ENCODE measurements at regions of chr13 and their contacts with region 1.

Region 1: GRCh38 chr13:35720690-35721554 is 244.4 kb upstream of the MAB21L1 start:
- DNase-seq: peak in 4 of 5 donors; percentile 30 to 53 (median 44)
- ATAC-seq: peak in 3 of 4 donors; percentile 7 to 49 (median 20)
- H3K4me3 ChIP-seq: peak overlapping the region in 6 of 12 donors; percentile 23 to 33 (median 28)
- H3K27ac ChIP-seq: peak overlapping the region in 6 of 12 donors; percentile 3 to 44 (median 34)
- H3K4me1 ChIP-seq: peaks cover 0 to 41% (median 23%) of the 10 kb centered on the region in 12 donors
- H3K27me3 ChIP-seq: no peaks in the 10 kb centered on the region
- CTCF ChIP-seq: peak; percentile 80 to 91 (median 84)
- POLR2A ChIP-seq: no peak

Region 2: DNA sequence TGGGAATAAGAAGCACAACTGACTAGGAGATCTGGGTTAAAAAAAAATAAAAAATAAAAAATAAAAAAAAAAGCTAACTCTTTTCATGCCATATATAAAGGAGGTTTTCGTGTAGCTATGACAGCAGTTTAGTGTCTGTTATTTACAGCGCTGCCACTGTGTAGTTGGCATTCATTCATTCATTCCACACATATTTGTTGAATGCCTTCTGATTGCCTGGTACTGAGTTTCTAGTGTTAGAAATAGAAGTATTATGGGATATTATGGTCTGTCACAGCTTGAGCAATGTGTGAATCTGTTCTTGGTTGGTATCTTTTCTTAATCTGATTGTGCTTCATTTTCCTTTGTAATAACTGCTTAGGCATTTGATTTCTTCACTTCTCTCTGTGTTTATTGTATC is 541.4 kb before region 1 on chr13:
- intact Hi-C with region 1: loop called in 1 of 10 experiments (anchors 10 kb)
- DNase-seq: no peak
- ATAC-seq: peak; percentile 68 to 90 (median 73)
- H3K4me3 ChIP-seq: peak overlapping the region in 6 of 12 donors; percentile 1 to 32 (median 15)
- H3K27ac ChIP-seq: peak overlapping the region; percentile 2 to 73 (median 62)
- H3K4me1 ChIP-seq: peaks cover 0 to 21% (median 1%) of the 10 kb centered on the region in 12 donors
- H3K27me3 ChIP-seq: no peaks in the 10 kb centered on the region
- CTCF ChIP-seq: no peak
- POLR2A ChIP-seq: no peak

Region 3: DNA sequence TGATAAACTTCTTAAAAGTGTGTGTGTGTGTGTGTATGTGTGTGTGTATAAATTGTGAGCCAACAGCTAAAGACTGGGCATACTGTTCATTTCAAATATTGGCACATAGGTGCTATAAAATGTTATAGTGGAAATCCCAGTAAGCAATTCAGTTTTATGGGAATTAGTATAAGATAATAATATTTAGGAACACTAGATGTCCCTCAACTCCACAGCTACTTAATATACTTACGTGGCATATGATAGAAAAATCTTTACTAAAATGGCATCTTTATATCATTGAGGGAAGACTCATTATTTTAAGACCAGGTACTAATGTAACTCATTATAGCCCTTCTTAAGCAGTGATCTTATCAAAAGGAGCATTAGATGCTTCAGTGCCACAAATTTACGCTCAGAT is 510.7 kb before region 1 on chr13:
- intact Hi-C with region 1: loop called in 3 of 10 experiments (anchors 10 kb)
- DNase-seq: no peak
- ATAC-seq: no peak
- H3K4me3 ChIP-seq: no peak overlapping the region
- H3K27ac ChIP-seq: no peak overlapping the region
- H3K4me1 ChIP-seq: peaks cover 0 to 3% (median 0%) of the 10 kb centered on the region in 12 donors
- H3K27me3 ChIP-seq: no peaks in the 10 kb centered on the region
- CTCF ChIP-seq: peak in 5 of 12 donors; percentile 7 to 29 (median 26)
- POLR2A ChIP-seq: no peak

Region 4: GRCh38 chr13:35470671-35471661 is 250.0 kb before region 1 on chr13:
- intact Hi-C with region 1: loop called in 1 of 10 experiments (anchors 5 kb)
- DNase-seq: peak; percentile 49 to 70 (median 60)
- ATAC-seq: peak; percentile 67 to 95 (median 90)
- H3K4me3 ChIP-seq: peak overlapping the region; percentile 22 to 61 (median 58)
- H3K27ac ChIP-seq: peak overlapping the region; percentile 53 to 88 (median 72)
- H3K4me1 ChIP-seq: peaks cover 0 to 19% (median 0%) of the 10 kb centered on the region in 12 donors
- H3K27me3 ChIP-seq: peaks cover 0 to 43% (median 0%) of the 10 kb centered on the region in 9 donors
- CTCF ChIP-seq: peak in 1 of 12 donors; percentile 18
- POLR2A ChIP-seq: no peak

Region 5: DNA sequence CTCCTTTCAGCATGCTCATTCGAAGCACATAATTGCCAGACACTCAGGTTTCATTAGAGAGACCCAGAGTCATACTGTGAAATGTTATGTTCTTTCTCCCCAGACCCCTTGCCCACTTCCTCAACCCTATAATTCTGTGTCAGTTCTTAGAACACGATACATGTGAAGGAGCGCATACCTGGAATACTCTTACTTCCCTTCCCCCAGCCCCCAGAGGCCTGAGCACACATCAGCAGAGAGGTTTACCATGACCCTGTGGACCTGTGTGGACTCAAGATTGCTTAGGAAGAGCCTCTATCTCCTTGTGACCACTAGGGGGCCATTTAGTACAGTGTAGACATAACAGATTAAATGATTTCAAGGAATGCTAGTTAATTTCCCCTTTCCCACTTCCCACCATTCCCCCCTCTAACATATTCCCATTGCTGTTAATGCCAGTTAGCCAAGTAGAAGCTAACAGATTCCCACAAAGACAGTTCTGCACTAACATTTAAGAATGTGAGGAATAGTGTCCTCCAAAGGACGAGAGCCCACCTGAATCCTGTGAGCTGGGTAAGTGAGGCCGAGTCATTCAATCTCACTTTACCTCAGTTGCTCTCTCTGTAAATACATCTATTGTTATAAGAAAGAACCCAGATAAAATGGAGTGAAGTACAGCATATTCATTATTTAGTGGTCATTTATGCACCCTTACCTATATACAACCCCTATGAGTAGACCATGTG is 90.2 kb before region 1 on chr13:
- intact Hi-C with region 1: loop called in 5 of 10 experiments (anchors 2 to 10 kb)
- DNase-seq: no peak
- ATAC-seq: peak in 3 of 4 donors; percentile 70 to 82 (median 79)
- H3K4me3 ChIP-seq: no peak overlapping the region
- H3K27ac ChIP-seq: no peak overlapping the region
- H3K4me1 ChIP-seq: no peaks in the 10 kb centered on the region
- H3K27me3 ChIP-seq: no peaks in the 10 kb centered on the region
- CTCF ChIP-seq: peak; percentile 44 to 77 (median 69)
- POLR2A ChIP-seq: no peak

Region 6: GRCh38 chr13:35789335-35790165 is 68.6 kb after region 1 on chr13:
- intact Hi-C with region 1: loop called in 3 of 10 experiments (anchors 5 kb)
- DNase-seq: no peak
- ATAC-seq: peak in 3 of 4 donors; percentile 60 to 79 (median 64)
- H3K4me3 ChIP-seq: no peak overlapping the region
- H3K27ac ChIP-seq: no peak overlapping the region
- H3K4me1 ChIP-seq: peaks cover 0 to 4% (median 0%) of the 10 kb centered on the region in 12 donors
- H3K27me3 ChIP-seq: no peaks in the 10 kb centered on the region
- CTCF ChIP-seq: peak; percentile 17 to 71 (median 61)
- POLR2A ChIP-seq: no peak

Region 7: DNA sequence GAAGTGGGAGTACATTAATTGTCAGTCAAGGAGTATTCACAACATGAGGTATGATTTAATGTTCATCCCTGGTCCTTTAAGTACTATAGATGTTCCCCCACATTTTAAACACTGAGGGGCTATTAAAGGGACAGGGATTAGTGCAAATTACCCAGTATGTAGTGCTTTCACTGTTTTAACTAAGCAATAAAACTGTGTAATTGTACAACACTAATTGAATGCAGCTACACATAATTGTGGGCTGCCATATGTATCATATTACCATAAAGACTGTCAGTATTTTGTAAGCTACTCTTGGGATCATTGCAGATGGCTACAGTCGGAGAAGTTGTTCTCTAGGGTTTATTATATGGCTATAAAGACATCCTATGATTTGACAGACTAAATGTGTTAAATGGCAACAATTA is 93.7 kb after region 1 on chr13:
- intact Hi-C with region 1: no loop called
- DNase-seq: no peak
- ATAC-seq: no peak
- H3K4me3 ChIP-seq: no peak overlapping the region
- H3K27ac ChIP-seq: no peak overlapping the region
- H3K4me1 ChIP-seq: no peaks in the 10 kb centered on the region
- H3K27me3 ChIP-seq: no peaks in the 10 kb centered on the region
- CTCF ChIP-seq: no peak
- POLR2A ChIP-seq: no peak

Measured in heart left ventricle (tissue), 16 donors.